Motor neuron (in vitro differentiated cells): ENCODE measurements at regions of chr2 and their contacts with region 1.

Region 1: DNA sequence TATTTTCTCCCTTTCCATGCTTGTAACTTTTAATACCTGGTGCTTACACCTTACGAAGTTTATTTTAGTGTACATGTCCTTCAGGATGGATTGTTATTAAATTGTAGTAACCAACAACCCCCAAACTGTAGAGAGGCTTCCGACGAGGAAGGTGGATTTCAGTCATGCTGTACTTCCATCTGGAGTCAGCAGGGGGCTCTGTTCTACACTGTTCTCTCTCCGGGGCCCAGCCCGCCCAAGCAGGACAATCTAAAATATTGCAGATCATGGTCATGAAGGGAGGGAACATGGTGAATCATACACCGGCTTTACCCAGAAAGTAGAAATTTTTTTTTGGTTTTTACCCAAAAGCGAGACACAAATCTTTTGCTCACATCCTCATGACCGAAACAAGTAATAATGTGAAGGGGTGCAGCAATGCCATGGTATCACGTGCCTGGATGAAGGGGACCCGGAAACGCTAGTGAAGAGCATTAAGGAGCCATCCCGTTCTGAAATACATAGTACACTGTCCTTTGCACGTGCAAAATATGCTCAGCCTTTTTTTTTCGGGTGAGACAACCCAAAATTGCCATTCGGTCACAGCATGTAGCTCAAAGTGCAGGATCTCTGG is 884.8 kb downstream of the EPHA4 start:
- ATAC-seq: peak; percentile 60 to 87 (median 80)
- H3K4me3 ChIP-seq: no peak overlapping the region
- H3K27ac ChIP-seq: no peak overlapping the region
- H3K4me1 ChIP-seq: no peaks in the 10 kb centered on the region

Region 2: DNA sequence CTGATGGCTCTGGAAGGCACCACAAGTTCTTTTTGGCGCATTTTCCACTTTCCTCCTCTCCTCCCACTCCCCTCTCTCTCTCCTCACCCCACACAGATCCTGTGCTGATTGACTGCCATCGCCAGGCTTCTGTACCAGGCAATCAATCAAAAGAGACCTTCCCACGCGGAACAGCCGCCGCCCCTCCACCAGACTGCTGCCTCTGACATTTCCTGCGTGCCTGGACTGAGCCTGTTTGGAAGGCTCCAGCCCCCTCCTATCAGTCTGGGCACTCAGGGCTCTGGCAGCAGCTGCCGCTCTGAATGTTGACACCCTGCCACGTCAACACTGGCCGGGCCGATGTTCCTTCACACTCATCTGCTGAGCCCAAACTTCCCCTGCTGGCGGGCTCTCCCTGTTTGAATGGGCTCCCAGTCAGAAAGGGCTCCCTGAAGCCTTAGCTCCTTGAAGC is 417.0 kb after region 1 on chr2:
- in situ Hi-C with region 1: loop called in 1 of 9 experiments (anchors 25 kb)
- ATAC-seq: peak; percentile 63 to 96 (median 82)
- H3K4me3 ChIP-seq: no peak overlapping the region
- H3K27ac ChIP-seq: no peak overlapping the region
- H3K4me1 ChIP-seq: no peaks in the 10 kb centered on the region

Region 3: GRCh38 chr2:222272446-222273015 is 1585.2 kb after region 1 on chr2:
- in situ Hi-C with region 1: no loop called
- ATAC-seq: peak in 5 of 8 experiments; percentile 54 to 70 (median 67)
- H3K4me3 ChIP-seq: no peak overlapping the region
- H3K27ac ChIP-seq: no peak overlapping the region
- H3K4me1 ChIP-seq: peaks cover 8 to 12% of the 10 kb centered on the region in 2 donors